ENCODE measurements at regions of chr9 and their contacts with region 1.

Region 1: GRCh38 chr9:69961830-69962229 is 81.8 kb upstream of the MAMDC2 start:
- DNase-seq: no peak
- H3K4me3 ChIP-seq: no peak overlapping the region
- H3K27ac ChIP-seq: no peak overlapping the region
- H3K27me3 ChIP-seq: no peaks in the 10 kb centered on the region
- CTCF ChIP-seq: no peak

Region 2: DNA sequence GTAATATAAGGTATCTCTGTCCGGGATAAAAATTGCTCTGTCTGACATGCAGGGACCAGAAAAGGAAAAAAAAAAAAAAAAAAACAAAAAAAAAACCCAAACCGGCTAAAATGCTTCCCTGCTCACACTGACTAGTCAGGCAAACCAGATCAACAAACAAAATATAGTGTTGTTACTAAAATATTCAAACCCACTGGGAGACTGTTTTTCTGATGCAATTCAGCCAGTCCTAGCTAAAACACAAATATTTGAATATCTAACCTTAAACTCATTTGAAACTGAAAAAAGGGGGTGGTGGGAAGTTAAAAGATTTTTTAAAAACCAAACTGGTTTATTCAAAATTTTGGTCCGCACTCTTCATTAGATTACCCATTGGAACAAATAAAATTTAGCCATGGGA is 350.6 kb before region 1 on chr9:
- CTCF ChIA-PET with region 1: no interaction called
- POLR2A ChIA-PET with region 1: interaction called, 10 read pairs
- DNase-seq: no peak
- H3K4me3 ChIP-seq: no peak overlapping the region
- H3K27ac ChIP-seq: no peak overlapping the region
- H3K27me3 ChIP-seq: no peaks in the 10 kb centered on the region
- CTCF ChIP-seq: no peak

Region 3: GRCh38 chr9:70013598-70014196 is 51.9 kb after region 1 on chr9:
- CTCF ChIA-PET with region 1: no interaction called
- POLR2A ChIA-PET with region 1: no interaction called
- DNase-seq: peak; percentile 71
- H3K4me3 ChIP-seq: no peak overlapping the region
- H3K27ac ChIP-seq: peak overlapping the region; percentile 42
- H3K27me3 ChIP-seq: no peaks in the 10 kb centered on the region
- CTCF ChIP-seq: no peak

Measured in AG04450 (cell line).